Activated CD4-positive, alpha-beta T cell treated with anti-CD3 and anti-CD28 coated beads for 36 hours (primary cell): ENCODE measurements at regions of chr1 and their contacts with region 1.

Region 1: DNA sequence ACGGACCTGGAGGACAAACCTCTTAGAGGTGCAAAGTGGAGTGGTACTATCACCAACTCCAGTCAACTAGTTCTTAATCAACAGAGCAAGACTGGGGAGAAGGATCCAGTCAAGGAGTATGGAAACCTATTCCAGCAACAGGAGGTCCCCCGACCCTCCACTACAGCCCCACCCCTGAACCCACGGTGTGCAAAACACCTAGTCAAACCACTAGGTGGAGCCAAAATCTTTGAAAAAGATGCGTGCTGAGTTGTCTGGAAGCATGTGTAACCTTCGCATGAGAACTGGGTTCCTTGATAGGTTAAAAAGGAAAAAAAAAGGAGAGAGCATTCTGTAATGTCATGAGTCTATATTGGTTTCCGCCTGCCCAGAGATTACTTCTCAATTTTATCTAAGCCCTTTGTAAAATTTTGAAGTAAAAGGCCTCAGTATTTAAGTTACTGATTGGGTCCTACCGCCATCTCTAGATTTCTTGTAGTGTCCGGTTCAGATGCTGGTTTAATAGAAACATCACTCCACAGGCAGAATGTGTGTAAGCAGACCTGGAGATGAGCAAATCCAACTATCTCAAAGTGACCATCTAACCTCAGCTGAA is 81.9 kb upstream of the HAO2 start:
- DNase-seq: peak; percentile 47
- ATAC-seq: peak; percentile 82
- H3K4me3 Mint-ChIP-seq: no peak overlapping the region
- H3K27ac Mint-ChIP-seq: no peak overlapping the region
- H3K4me1 Mint-ChIP-seq: no peaks in the 10 kb centered on the region
- H3K27me3 Mint-ChIP-seq: peaks cover 11% of the 10 kb centered on the region

Region 2: DNA sequence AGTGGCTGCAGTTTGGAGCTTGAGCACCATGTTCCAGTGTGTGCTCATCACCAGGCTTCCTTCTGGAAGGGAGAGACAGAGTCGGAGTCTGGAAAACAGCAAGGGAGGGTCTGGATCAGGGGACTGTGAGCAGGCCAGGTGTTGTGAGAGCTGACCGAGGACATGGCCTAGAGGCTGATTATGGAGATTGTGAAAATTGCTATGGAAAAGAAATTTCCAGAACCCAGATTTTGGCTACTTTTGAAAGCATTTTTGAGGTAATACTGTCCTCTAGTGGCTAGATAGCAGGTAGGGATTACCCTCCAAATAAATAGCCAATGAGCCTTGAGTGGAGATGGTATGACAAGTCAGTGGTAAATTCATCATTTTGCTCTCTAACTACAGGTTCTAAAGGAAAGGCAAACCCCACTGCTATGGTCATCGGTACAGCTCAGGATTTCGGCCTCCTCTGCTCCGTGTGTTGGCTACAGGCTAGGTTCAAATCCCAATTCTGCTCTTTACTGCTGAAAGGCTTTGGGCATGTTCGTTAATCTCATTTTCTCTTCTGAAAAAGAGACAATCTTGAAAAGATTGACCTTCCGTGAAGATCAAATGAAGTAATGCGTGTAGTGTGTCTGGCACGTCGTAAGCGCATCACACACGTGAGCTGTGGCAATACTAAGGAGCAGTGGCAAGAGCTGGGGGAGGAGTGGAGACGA is 80.9 kb after region 1 on chr1:
- CTCF ChIA-PET with region 1: interaction called, 3 read pairs
- POLR2A ChIA-PET with region 1: no interaction called
- intact Hi-C with region 1: loop called (anchors 1 kb)
- DNase-seq: no peak
- ATAC-seq: peak; percentile 26
- H3K4me3 Mint-ChIP-seq: no peak overlapping the region
- H3K27ac Mint-ChIP-seq: no peak overlapping the region
- H3K4me1 Mint-ChIP-seq: no peaks in the 10 kb centered on the region
- H3K27me3 Mint-ChIP-seq: peaks cover 10% of the 10 kb centered on the region

Region 3: DNA sequence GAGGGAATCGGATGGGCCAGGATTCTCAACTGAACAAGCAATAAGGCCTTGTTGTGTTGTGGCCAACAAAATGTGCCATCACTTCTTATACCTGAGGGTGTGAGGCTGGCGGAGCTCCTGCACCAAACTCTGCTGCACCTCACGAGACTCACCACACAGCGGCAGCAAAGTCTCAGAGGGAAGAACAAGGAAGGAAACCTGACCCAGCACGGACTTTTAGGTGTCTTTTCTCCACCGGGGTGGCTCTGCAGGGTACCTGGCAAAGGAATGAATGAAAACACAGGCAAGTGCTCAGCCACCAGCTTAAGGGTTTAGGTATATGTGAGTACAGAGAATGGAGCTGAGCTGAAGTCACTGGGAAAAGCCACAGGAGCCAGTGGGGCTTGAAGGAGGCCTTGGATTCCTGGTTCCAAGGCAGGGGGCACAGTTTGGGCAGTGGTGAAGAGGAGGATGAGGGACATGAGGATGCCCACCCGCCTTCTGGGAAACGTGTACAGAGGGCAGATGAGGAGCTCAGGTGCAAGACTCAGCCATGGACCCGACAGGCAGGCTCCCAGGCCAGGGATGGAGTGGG is 189.3 kb after region 1 on chr1:
- CTCF ChIA-PET with region 1: no interaction called
- POLR2A ChIA-PET with region 1: no interaction called
- intact Hi-C with region 1: loop called in 1 of 2 experiments (anchors 2 kb)
- DNase-seq: peak; percentile 63
- ATAC-seq: no peak
- H3K4me3 Mint-ChIP-seq: no peak overlapping the region
- H3K27ac Mint-ChIP-seq: no peak overlapping the region
- H3K4me1 Mint-ChIP-seq: no peaks in the 10 kb centered on the region
- H3K27me3 Mint-ChIP-seq: peaks cover 9% of the 10 kb centered on the region

Region 4: DNA sequence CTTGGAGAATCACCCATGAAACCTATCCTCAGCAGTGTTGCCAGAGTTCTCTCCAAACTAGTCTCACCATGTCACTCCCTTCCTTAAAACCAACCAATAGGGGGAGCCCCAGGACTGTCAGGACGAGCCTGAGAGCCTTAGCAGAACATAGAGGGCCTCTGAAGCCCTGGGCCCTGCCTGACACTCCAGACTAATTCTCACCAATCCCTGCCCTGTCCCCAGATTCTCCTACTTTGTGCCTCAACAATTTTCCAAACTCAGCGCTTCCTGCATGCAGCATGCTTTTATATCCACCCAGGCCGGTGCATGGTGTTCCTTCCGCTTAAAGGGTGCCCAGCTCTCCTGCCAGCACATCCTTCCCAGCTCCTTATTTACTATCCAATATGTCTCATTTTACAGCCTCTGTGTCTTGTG is 263.0 kb after region 1 on chr1:
- CTCF ChIA-PET with region 1: no interaction called
- POLR2A ChIA-PET with region 1: no interaction called
- intact Hi-C with region 1: loop called in 1 of 2 experiments (anchors 10 kb)
- DNase-seq: peak; percentile 46
- ATAC-seq: peak; percentile 53
- H3K4me3 Mint-ChIP-seq: no peak overlapping the region
- H3K27ac Mint-ChIP-seq: no peak overlapping the region
- H3K4me1 Mint-ChIP-seq: no peaks in the 10 kb centered on the region
- H3K27me3 Mint-ChIP-seq: peaks cover 4% of the 10 kb centered on the region